ENCODE measurements at regions of chr1 and their contacts with region 1.

Region 1: GRCh38 chr1:25692560-25692959 is 76.0 kb downstream of the MAN1C1 start:
- DNase-seq: peak; percentile 75

Region 2: DNA sequence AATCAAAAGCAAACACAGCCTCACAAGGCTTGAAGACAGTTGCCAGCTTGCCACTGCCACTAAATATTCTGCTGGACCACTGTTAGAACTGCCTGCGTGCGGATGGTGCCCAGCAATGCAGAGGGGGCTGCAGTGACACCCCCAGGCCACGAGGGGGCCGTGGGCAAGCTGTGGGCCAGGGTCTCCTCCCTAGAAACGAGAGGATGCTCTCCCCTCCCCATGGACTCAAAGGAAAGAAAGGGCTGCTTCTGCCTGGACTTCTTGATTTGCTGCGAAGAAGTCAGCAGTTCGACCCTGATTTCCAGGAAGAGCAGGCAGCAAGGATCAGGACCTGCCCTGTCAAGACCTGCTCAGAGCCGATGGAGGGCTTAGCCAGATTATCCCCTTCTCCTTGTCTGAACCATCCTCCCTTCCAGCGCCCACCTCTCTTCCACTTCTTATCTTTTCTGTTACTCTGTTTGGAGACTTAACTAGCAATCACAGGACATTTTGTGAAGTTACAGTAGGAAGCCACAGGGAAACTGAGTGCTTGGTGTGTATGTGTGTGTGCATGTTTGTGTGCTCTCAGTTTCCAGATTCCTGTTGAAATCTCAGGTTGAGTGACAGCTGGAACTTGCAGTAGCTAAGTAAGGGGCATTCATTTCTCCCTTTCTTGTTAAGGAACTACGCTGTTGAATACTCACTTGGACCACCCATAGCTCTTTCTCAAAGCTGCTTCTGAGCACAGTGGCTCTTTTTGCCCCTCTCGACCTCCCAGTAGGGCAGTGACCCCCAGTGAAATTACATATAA is 73.3 kb before region 1 on chr1:
- CTCF ChIA-PET with region 1: interaction called, 11 read pairs
- POLR2A ChIA-PET with region 1: no interaction called
- DNase-seq: peak; percentile 66

Region 3: DNA sequence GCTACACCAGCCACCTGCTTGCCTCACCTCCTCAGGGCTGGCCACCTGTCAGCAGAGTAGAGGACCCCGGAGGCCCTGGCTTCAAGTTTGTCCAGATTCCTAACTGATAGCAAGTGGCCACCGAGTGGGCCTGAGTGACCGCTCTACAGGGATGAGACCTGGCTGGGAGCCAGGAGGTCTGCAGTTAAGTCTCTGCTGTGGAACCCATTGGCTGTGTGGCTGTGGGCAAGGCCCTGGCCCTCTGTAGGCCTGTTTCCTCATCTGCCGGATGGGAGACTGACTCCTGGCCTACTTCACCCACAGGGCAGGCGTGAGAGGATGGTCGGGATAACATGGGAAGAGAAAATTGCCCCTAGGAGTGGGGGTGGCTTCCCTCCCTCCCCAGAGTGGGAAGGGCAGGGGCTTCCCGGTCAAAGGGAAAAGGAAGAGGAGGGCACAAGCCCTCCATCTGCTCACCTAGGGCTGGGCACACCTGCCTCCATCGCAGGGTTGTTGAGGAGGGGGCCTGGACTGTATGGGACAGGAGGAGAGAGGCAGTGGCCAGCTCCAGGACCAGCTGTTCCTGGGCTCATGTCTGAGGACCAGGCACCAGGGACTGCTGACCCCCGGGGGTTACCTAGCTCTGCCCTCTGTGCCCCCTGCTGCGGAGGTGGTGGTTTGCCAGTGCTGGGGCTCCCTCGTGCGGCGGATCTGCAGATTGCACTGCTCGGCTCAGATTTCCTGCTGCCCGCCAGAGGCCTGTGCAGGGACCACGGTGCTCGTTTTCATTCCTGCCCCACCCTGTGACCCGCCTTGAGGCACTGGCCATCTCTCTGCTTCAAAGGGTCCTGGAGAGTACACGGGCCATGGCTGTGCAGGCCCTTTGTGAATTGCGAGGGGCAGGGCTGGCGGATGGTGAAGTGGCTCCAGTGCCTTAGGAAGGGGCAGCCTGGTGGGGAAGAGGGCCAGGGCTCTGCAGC is 118.1 kb after region 1 on chr1:
- CTCF ChIA-PET with region 1: no interaction called
- POLR2A ChIA-PET with region 1: no interaction called
- DNase-seq: peak; percentile 77

Region 4: GRCh38 chr1:25848531-25848930 is 156.0 kb after region 1 on chr1:
- CTCF ChIA-PET with region 1: no interaction called
- POLR2A ChIA-PET with region 1: no interaction called
- DNase-seq: no peak